ENCODE measurements at regions of chr13 and their contacts with region 1.

Region 1: DNA sequence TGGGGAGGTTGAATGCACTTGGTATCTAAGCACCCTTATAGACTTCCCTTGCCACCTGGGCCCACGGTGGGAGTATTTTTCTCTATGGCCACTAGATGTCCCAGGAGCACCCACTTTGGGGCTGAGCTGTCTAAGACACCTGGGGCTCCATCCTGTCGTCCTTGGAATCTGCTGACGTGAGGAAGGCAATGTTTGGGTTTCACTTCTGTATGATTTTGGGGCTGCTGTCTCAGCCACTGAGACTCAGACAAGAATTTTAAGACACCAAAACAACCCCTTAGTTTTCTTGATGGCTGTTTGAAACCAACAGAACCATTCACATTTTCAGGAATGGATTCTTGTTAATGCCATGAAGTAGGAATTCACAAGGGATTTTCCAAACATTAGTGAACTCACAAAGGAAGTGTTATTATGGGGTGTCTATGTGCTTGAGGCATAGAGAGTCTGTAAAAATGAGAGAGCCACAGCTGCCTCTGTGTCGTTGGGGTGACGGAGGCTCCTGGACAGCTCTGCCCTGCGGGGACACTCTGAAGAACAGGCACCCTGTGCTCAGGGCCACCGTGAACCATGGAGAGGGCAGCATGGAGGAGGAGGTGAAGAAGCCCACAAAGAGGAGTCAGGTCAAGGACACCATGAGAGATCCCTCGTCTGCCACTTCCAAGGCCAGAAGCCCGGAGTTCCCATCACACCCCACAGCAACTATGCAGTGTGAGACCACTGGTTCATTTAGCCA is 106.8 kb upstream of the SPATA13 start:
- DNase-seq: no peak
- H3K4me3 ChIP-seq: no peak overlapping the region
- H3K27me3 ChIP-seq: no peaks in the 10 kb centered on the region
- CTCF ChIP-seq: peak; percentile 79

Region 2: DNA sequence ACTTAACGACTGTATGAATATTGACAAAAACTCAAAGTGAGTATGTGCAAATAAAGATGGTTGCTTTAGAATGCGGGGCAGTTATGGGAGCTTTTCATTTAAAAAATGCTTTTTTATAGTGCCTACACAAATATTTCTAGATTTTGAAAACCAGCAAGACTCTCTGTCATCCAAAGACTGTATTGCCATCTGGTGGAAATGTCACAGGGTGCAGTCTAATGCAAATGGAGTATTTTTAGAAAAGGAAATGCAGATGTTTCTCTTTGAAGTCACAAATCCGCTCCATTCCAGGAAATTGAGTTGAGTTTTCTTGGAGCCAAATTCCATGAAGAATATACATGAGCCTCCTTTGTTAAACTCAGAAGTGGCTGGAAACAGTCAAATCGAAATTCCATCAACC is 154.1 kb before region 1 on chr13:
- CTCF ChIA-PET with region 1: no interaction called
- POLR2A ChIA-PET with region 1: no interaction called
- DNase-seq: no peak
- H3K4me3 ChIP-seq: no peak overlapping the region
- H3K27me3 ChIP-seq: peaks cover 2% of the 10 kb centered on the region; the same call in 1 of the 2 replicates
- CTCF ChIP-seq: peak; percentile 57

Region 3: DNA sequence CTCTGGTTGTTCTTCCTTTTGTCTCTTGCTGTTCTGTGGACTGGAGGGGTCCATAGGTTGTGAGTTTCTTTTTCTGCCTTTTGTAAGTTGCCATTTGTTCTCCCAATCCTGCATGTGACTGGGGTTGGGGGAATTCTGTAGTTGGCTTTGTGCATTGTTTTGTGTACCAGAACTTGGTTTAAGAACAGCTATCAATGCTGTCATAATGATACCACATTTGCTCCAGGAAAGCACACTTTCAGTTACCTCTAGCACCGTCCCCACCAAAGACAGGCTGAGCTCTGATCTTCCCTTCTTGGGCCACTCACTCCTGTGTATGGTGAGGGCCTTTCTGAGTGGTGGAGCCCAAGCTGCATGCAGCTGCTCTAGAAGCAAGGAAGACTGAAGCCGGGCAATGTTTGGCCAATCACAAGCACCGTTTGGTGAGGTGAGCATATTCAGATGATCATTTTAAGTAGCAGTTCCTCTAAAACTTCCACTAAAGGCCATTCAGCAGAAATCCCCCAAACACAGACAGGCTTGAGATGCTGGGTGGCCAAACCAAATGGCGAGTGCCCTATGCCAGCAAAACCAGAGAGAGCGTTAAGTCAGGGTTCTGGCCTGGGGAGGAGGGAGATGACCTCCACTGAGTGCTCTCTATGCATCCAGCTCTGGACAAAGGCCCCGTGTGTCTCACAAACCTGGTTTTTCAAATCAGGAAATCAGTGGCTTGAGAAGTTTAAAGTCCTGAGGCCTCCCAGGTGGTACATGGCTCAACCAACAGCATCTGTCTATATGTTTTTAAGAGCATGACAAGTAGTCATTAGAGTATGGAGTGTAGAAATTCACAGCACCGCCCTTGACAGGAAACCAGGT is 13.8 kb before region 1 on chr13:
- CTCF ChIA-PET with region 1: interaction called, 22 read pairs
- POLR2A ChIA-PET with region 1: no interaction called
- DNase-seq: no peak
- H3K4me3 ChIP-seq: no peak overlapping the region
- H3K27me3 ChIP-seq: peaks cover 4% of the 10 kb centered on the region
- CTCF ChIP-seq: no peak

Region 4: GRCh38 chr13:24135674-24136300 is 82.1 kb after region 1 on chr13:
- CTCF ChIA-PET with region 1: interaction called, 11 read pairs
- POLR2A ChIA-PET with region 1: no interaction called
- DNase-seq: no peak
- H3K4me3 ChIP-seq: no peak overlapping the region
- H3K27me3 ChIP-seq: no peaks in the 10 kb centered on the region
- CTCF ChIP-seq: no peak

Region 5: GRCh38 chr13:24237356-24237755 is 183.7 kb after region 1 on chr13:
- CTCF ChIA-PET with region 1: no interaction called
- POLR2A ChIA-PET with region 1: no interaction called
- DNase-seq: no peak
- H3K4me3 ChIP-seq: no peak overlapping the region
- H3K27me3 ChIP-seq: no peaks in the 10 kb centered on the region
- CTCF ChIP-seq: no peak

Measured in BJ (cell line).